ENCODE measurements at regions of chr9 and their contacts with region 1.

Region 1: GRCh38 chr9:72478966-72479365 is 42.4 kb upstream of the TMC1 start:
- DNase-seq: no peak
- ATAC-seq: no peak
- H3K4me3 ChIP-seq: no peak overlapping the region
- H3K4me3 Mint-ChIP-seq: peak overlapping the region in 7 of 10 donors; percentile 46 to 80 (median 62)
- H3K27ac ChIP-seq: no peak overlapping the region
- H3K27ac Mint-ChIP-seq: peak overlapping the region in 1 of 9 donors; percentile 80
- H3K4me1 ChIP-seq: peaks cover 0 to 6% of the 10 kb centered on the region in 2 donors
- H3K4me1 Mint-ChIP-seq: peaks cover 8 to 43% (median 19%) of the 10 kb centered on the region in 7 donors
- H3K27me3 ChIP-seq: no peaks in the 10 kb centered on the region
- H3K27me3 Mint-ChIP-seq: no peaks in the 10 kb centered on the region

Region 2: GRCh38 chr9:72509635-72510034 is 30.7 kb after region 1 on chr9:
- CTCF ChIA-PET with region 1: no interaction called
- POLR2A ChIA-PET with region 1: no interaction called
- intact Hi-C with region 1: loop called in 1 of 2 experiments (anchors 2 kb)
- DNase-seq: no peak
- ATAC-seq: no peak
- H3K4me3 ChIP-seq: no peak overlapping the region
- H3K4me3 Mint-ChIP-seq: peak overlapping the region in 1 of 10 donors; percentile 6
- H3K27ac ChIP-seq: no peak overlapping the region
- H3K27ac Mint-ChIP-seq: peak overlapping the region in 3 of 9 donors; percentile 29 to 62 (median 54)
- H3K4me1 ChIP-seq: no peaks in the 10 kb centered on the region
- H3K4me1 Mint-ChIP-seq: peaks cover 0 to 12% (median 0%) of the 10 kb centered on the region in 7 donors
- H3K27me3 ChIP-seq: no peaks in the 10 kb centered on the region
- H3K27me3 Mint-ChIP-seq: no peaks in the 10 kb centered on the region

Measured in naive thymus-derived CD4-positive, alpha-beta T cell (primary cell).